Activated CD4-positive, alpha-beta T cell treated with anti-CD3 and anti-CD28 coated beads for 36 hours (primary cell): ENCODE measurements at regions of chr9 and their contacts with region 1.

Region 1: GRCh38 chr9:105244003-105244733 is at the start of gene SLC44A1:
- DNase-seq: peak; percentile 96
- ATAC-seq: peak; percentile 96
- H3K4me3 Mint-ChIP-seq: peak within 1 kb of the TSS; percentile 86
- H3K27ac Mint-ChIP-seq: peak within 1 kb of the TSS; percentile 77
- H3K4me1 Mint-ChIP-seq: peaks cover 22% of the 10 kb centered on the region
- H3K27me3 Mint-ChIP-seq: peaks cover 12% of the 10 kb centered on the region
- total RNA-seq, gene SLC44A1: 9.7 to 10.4 TPM

Region 2: DNA sequence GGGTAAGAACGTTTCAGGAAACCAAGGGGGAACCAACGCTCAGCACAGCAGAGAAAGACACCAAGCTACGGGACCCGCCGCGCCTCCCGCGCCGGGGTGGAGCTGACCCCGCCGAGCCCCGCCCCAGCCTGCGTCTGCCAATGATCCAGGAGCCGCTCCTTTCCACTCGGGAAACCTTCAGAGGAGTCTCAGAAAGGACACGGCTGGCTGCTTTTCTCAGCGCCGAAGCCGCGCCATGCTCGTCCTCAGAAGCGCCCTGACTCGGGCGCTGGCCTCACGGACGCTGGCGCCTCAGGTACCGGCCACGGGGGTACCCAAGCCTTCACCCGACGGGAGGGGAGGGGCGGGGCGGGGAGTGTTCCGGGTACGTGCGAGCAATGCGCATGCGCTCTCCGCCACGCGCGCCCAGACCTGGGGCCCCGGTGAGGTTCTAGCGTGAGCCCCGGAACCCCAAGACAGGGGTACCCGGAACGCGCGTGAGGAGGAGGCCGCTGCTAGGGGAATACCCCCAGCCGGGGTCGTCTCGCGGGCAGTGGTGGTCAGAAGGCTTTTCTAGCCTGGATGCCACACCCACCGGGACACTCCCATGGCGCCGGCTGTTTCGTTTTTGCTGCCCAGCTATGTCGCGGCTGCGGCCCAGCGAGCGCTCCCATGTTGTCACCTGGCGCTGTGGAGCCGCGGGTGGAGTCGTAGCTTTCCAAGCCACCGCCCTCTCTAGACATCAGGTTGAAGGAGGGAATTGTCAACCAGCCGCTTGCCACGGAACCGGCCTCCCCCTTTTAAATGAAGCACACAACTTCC is 496.4 kb before region 1 on chr9 and contains the start of gene NIPSNAP3A:
- CTCF ChIA-PET with region 1: no interaction called
- POLR2A ChIA-PET with region 1: no interaction called
- intact Hi-C with region 1: loop called in 1 of 2 experiments (anchors 1 kb)
- DNase-seq: peak; percentile 92
- ATAC-seq: peak; percentile 93
- H3K4me3 Mint-ChIP-seq: peak within 1 kb of the TSS; percentile 85
- H3K27ac Mint-ChIP-seq: peak within 1 kb of the TSS; percentile 96
- H3K4me1 Mint-ChIP-seq: peaks cover 16% of the 10 kb centered on the region
- H3K27me3 Mint-ChIP-seq: no peaks in the 10 kb centered on the region
- total RNA-seq, gene NIPSNAP3A: 7.2 to 11.7 TPM

Region 3: GRCh38 chr9:104968025-104968982 is 275.9 kb before region 1 on chr9:
- CTCF ChIA-PET with region 1: interaction called, 3 read pairs
- POLR2A ChIA-PET with region 1: no interaction called
- intact Hi-C with region 1: loop called in 1 of 2 experiments (anchors 1 kb)
- DNase-seq: peak; percentile 94
- ATAC-seq: peak; percentile 99
- H3K4me3 Mint-ChIP-seq: peak overlapping the region; percentile 86
- H3K27ac Mint-ChIP-seq: peak overlapping the region; percentile 92
- H3K4me1 Mint-ChIP-seq: peaks cover 13% of the 10 kb centered on the region
- H3K27me3 Mint-ChIP-seq: peaks cover 9% of the 10 kb centered on the region

Region 4: DNA sequence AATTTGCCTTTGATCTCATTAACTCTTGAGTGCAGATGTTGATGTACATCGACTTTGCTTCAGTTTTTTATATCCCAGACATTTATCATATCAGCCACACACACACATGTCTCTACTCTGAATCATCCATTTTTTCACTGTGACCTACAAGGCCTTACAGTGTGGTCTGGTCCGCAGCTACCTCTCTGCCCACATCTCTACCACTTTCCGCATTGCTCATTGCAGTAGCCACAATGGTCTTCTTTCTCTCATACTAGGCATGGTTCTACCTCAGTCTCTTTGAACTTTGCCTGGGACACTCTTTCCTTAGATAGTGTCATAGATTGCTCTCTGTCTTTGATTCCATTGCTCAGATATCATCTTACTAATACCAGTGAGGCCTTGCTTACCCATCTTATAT is 115.7 kb after region 1 on chr9:
- CTCF ChIA-PET with region 1: interaction called, 3 read pairs
- POLR2A ChIA-PET with region 1: no interaction called
- intact Hi-C with region 1: loop called in 1 of 2 experiments (anchors 2 kb)
- DNase-seq: peak; percentile 79
- ATAC-seq: peak; percentile 87
- H3K4me3 Mint-ChIP-seq: no peak overlapping the region
- H3K27ac Mint-ChIP-seq: no peak overlapping the region
- H3K4me1 Mint-ChIP-seq: peaks cover 17% of the 10 kb centered on the region
- H3K27me3 Mint-ChIP-seq: no peaks in the 10 kb centered on the region

Region 5: GRCh38 chr9:105447814-105448812 is 203.9 kb after region 1 on chr9 and contains the start of gene FSD1L:
- CTCF ChIA-PET with region 1: no interaction called
- POLR2A ChIA-PET with region 1: no interaction called
- intact Hi-C with region 1: loop called (anchors 1 to 5 kb)
- DNase-seq: peak; percentile 91
- ATAC-seq: peak; percentile 96
- H3K4me3 Mint-ChIP-seq: peak within 1 kb of the TSS; percentile 78
- H3K27ac Mint-ChIP-seq: peak within 1 kb of the TSS; percentile 44
- H3K4me1 Mint-ChIP-seq: peaks cover 9% of the 10 kb centered on the region
- H3K27me3 Mint-ChIP-seq: no peaks in the 10 kb centered on the region
- total RNA-seq, gene FSD1L: 2.4 to 3.0 TPM

Region 6: DNA sequence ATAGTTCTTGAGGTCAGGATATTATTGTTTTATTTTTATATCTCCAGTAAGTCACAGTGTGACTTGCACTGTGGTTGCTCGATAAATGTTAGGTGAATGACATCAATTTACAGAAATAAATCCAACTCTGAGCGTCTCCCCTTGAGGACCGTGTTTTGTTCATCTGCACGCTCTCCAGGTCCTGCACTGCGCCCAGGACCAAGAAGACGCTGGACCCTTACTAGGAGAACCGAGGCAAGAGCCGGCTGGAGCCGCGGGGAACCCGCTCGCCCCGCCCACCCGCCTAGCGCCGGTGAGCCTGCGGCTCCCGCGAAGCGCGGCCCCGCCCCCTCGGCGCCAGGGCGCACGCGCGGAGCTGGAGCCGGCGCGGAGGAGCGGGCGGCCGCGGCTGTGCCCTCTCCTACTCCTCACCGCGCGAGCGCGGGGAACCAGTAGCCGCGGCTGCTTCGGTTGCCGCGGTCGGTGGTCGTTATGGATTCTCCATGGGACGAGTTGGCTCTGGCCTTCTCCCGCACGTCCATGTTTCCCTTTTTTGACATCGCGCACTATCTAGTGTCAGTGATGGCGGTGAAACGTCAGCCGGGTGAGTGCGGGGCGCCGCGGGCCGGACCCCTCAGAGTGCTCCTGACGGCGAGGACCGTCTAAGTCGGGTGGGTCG is 450.2 kb after region 1 on chr9 and contains the start of gene TMEM38B:
- CTCF ChIA-PET with region 1: no interaction called
- POLR2A ChIA-PET with region 1: no interaction called
- intact Hi-C with region 1: loop called (anchors 1 to 10 kb)
- DNase-seq: peak; percentile 88
- ATAC-seq: peak; percentile 85
- H3K4me3 Mint-ChIP-seq: peak within 1 kb of the TSS; percentile 76
- H3K27ac Mint-ChIP-seq: peak within 1 kb of the TSS; percentile 86
- H3K4me1 Mint-ChIP-seq: peaks cover 27% of the 10 kb centered on the region
- H3K27me3 Mint-ChIP-seq: peaks cover 15% of the 10 kb centered on the region
- total RNA-seq, gene TMEM38B: 14.5 to 24.8 TPM